Right ventricle myocardium inferior (tissue), 1 donor: ENCODE measurements at regions of chr11 and their contacts with region 1.

Region 1: GRCh38 chr11:65817835-65818742 is 15.7 kb upstream of the SNX32 start:
- DNase-seq: peak; percentile 98
- ATAC-seq: peak; percentile 98

Region 2: GRCh38 chr11:65779851-65780577 is 38.1 kb before region 1 on chr11:
- intact Hi-C with region 1: loop called (anchors 1 kb)
- DNase-seq: peak; percentile 92
- ATAC-seq: peak; percentile 89

Region 3: GRCh38 chr11:65856689-65857499 is 38.8 kb after region 1 on chr11:
- intact Hi-C with region 1: no loop called
- DNase-seq: peak; percentile 94
- ATAC-seq: peak; percentile 43